Natural killer cell (primary cell): ENCODE measurements at regions of chr22 and their contacts with region 1.

Region 1: GRCh38 chr22:37676736-37677492 is 1.5 kb downstream of the LGALS1 start:
- DNase-seq: peak; percentile 91 to 95
- ATAC-seq: peak; percentile 84 to 95 (median 87)
- H3K4me3 ChIP-seq: peak overlapping the region; percentile 82
- H3K4me3 Mint-ChIP-seq: peak overlapping the region; percentile 93
- H3K27ac ChIP-seq: peak overlapping the region; percentile 97
- H3K27ac Mint-ChIP-seq: peak overlapping the region; percentile 94 to 97
- H3K4me1 ChIP-seq: peaks cover 76% of the 10 kb centered on the region
- H3K4me1 Mint-ChIP-seq: peaks cover 34 to 69% of the 10 kb centered on the region in 2 donors
- H3K27me3 ChIP-seq: no peaks in the 10 kb centered on the region
- H3K27me3 Mint-ChIP-seq: no peaks in the 10 kb centered on the region
- CTCF ChIP-seq: no peak

Region 2: GRCh38 chr22:37608477-37609239 is 68.3 kb before region 1 on chr22 and contains the start of gene GGA1:
- intact Hi-C with region 1: loop called (anchors 5 kb)
- DNase-seq: peak; percentile 92 to 99
- ATAC-seq: peak; percentile 77 to 94 (median 81)
- H3K4me3 ChIP-seq: peak within 1 kb of the TSS; percentile 84
- H3K4me3 Mint-ChIP-seq: peak within 1 kb of the TSS; percentile 98
- H3K27ac ChIP-seq: peak within 1 kb of the TSS; percentile 94
- H3K27ac Mint-ChIP-seq: peak within 1 kb of the TSS; percentile 98 to 99
- H3K4me1 ChIP-seq: peaks cover 61% of the 10 kb centered on the region
- H3K4me1 Mint-ChIP-seq: peaks cover 37 to 62% of the 10 kb centered on the region in 2 donors
- H3K27me3 ChIP-seq: no peaks in the 10 kb centered on the region
- H3K27me3 Mint-ChIP-seq: no peaks in the 10 kb centered on the region
- CTCF ChIP-seq: no peak
- total RNA-seq, gene GGA1: 69.3 to 87.8 (median 80.2) TPM

Region 3: GRCh38 chr22:37643225-37643847 is 33.6 kb before region 1 on chr22:
- intact Hi-C with region 1: loop called (anchors 1 kb)
- DNase-seq: peak; percentile 90
- ATAC-seq: peak; percentile 69 to 82 (median 71)
- H3K4me3 ChIP-seq: no peak overlapping the region
- H3K4me3 Mint-ChIP-seq: peak overlapping the region; percentile 53
- H3K27ac ChIP-seq: peak overlapping the region; percentile 31
- H3K27ac Mint-ChIP-seq: peak overlapping the region; percentile 75
- H3K4me1 ChIP-seq: peaks cover 46% of the 10 kb centered on the region
- H3K4me1 Mint-ChIP-seq: peaks cover 18 to 50% of the 10 kb centered on the region in 2 donors
- H3K27me3 ChIP-seq: no peaks in the 10 kb centered on the region
- H3K27me3 Mint-ChIP-seq: no peaks in the 10 kb centered on the region
- CTCF ChIP-seq: peak; percentile 91

Region 4: GRCh38 chr22:37658133-37659065 is 18.5 kb before region 1 on chr22 and contains the start of gene PDXP:
- intact Hi-C with region 1: loop called (anchors 1 kb)
- DNase-seq: peak; percentile 97 to 99
- ATAC-seq: peak; percentile 87 to 97 (median 89)
- H3K4me3 ChIP-seq: peak within 1 kb of the TSS; percentile 48
- H3K4me3 Mint-ChIP-seq: peak within 1 kb of the TSS; percentile 86
- H3K27ac ChIP-seq: peak within 1 kb of the TSS; percentile 64
- H3K27ac Mint-ChIP-seq: peak within 1 kb of the TSS; percentile 92 to 95
- H3K4me1 ChIP-seq: peaks cover 42% of the 10 kb centered on the region
- H3K4me1 Mint-ChIP-seq: peaks cover 37 to 47% of the 10 kb centered on the region in 2 donors
- H3K27me3 ChIP-seq: no peaks in the 10 kb centered on the region
- H3K27me3 Mint-ChIP-seq: no peaks in the 10 kb centered on the region
- CTCF ChIP-seq: no peak
- total RNA-seq, gene PDXP: 8.3 to 14.2 (median 13.4) TPM